Natural killer cell (primary cell): ENCODE measurements at regions of chr2 and their contacts with region 1.

Region 1: DNA sequence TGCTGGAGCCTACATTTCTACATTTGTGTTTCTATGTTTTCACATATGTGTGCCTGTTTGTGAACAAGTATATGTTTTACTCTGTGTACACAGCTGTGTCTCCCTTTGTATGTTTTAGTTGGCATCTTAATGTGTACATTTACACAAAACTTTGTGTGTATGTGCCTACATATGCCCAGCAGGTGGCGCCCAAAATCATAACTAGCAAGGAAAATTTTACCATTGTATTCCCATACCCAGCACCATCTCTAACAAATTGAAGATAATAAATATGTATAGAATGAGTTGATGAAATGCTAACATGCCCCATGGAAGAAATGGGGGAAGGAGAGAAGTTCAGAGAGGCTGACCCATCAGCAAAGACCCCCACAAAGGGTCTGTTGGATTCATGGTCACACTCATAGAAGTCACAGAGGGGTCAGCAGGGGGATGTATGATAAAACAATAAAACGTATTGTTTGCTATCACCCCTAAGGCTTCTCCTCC is 48.1 kb downstream of the PKDCC start:
- DNase-seq: peak; percentile 68 to 90
- ATAC-seq: peak; percentile 54 to 83 (median 69)
- H3K4me3 ChIP-seq: no peak overlapping the region
- H3K4me3 Mint-ChIP-seq: no peak overlapping the region
- H3K27ac ChIP-seq: no peak overlapping the region
- H3K27ac Mint-ChIP-seq: no peak overlapping the region
- H3K4me1 ChIP-seq: peaks cover 60% of the 10 kb centered on the region
- H3K4me1 Mint-ChIP-seq: peaks cover 30 to 41% of the 10 kb centered on the region in 2 donors
- H3K27me3 ChIP-seq: no peaks in the 10 kb centered on the region
- H3K27me3 Mint-ChIP-seq: no peaks in the 10 kb centered on the region
- CTCF ChIP-seq: peak; percentile 89

Region 2: GRCh38 chr2:42169100-42169873 is 73.3 kb after region 1 on chr2 and contains the start of gene EML4:
- intact Hi-C with region 1: loop called (anchors 2 kb)
- DNase-seq: peak; percentile 94 to 96
- ATAC-seq: peak; percentile 92 to 98 (median 94)
- H3K4me3 ChIP-seq: peak within 1 kb of the TSS; percentile 96
- H3K4me3 Mint-ChIP-seq: peak within 1 kb of the TSS; percentile 45
- H3K27ac ChIP-seq: peak within 1 kb of the TSS; percentile 94
- H3K27ac Mint-ChIP-seq: no peak within 1 kb of the TSS
- H3K4me1 ChIP-seq: peaks cover 19% of the 10 kb centered on the region
- H3K4me1 Mint-ChIP-seq: peaks cover 0 to 7% of the 10 kb centered on the region in 2 donors
- H3K27me3 ChIP-seq: no peaks in the 10 kb centered on the region
- H3K27me3 Mint-ChIP-seq: peaks cover 3 to 4% of the 10 kb centered on the region in 2 donors
- CTCF ChIP-seq: no peak
- total RNA-seq, gene EML4: 88.4 to 136 (median 91.5) TPM

Region 3: GRCh38 chr2:42196403-42197267 is 100.7 kb after region 1 on chr2:
- intact Hi-C with region 1: loop called (anchors 1 kb)
- DNase-seq: peak in 1 of 2 donors; percentile 76
- ATAC-seq: peak; percentile 84 to 88 (median 84)
- H3K4me3 ChIP-seq: no peak overlapping the region
- H3K4me3 Mint-ChIP-seq: no peak overlapping the region
- H3K27ac ChIP-seq: no peak overlapping the region
- H3K27ac Mint-ChIP-seq: peak overlapping the region; percentile 12 to 35
- H3K4me1 ChIP-seq: peaks cover 12% of the 10 kb centered on the region
- H3K4me1 Mint-ChIP-seq: peaks cover 38 to 39% of the 10 kb centered on the region in 2 donors
- H3K27me3 ChIP-seq: no peaks in the 10 kb centered on the region
- H3K27me3 Mint-ChIP-seq: no peaks in the 10 kb centered on the region
- CTCF ChIP-seq: peak; percentile 54

Region 4: DNA sequence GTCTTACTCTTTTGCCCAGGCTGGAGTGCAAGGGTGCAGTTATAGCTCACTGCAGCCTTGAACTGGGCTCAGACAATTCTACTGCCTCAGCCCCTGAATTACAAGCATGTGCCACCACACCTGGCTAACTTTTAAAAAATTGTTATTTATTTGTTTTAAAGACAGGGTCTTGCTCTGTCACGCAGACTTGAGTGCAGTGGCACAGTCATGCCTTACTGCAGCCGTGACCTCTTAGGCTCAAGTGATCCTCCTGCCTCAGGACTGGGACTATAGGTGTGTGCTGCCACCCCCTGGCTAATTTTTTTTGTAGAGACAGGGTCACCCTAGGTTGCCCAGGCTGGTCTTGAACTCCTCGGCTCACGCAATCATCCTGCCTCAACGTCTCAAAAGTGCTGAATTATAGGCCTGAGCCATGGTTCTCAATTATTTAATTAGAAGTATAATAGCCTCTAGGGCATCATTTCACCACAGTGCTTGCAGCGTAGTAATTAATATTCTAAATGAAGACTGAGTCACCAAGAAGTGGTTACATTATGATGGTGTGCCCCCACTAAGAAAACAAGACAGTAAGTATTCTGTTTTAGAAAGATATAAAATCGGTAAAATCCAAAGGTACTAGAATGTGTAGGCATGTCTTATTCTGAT is 142.8 kb after region 1 on chr2:
- intact Hi-C with region 1: loop called (anchors 1 kb)
- DNase-seq: peak in 1 of 2 donors; percentile 64
- ATAC-seq: peak; percentile 67 to 80 (median 72)
- H3K4me3 ChIP-seq: no peak overlapping the region
- H3K4me3 Mint-ChIP-seq: no peak overlapping the region
- H3K27ac ChIP-seq: no peak overlapping the region
- H3K27ac Mint-ChIP-seq: no peak overlapping the region
- H3K4me1 ChIP-seq: peaks cover 4% of the 10 kb centered on the region
- H3K4me1 Mint-ChIP-seq: peaks cover 13 to 29% of the 10 kb centered on the region in 2 donors
- H3K27me3 ChIP-seq: no peaks in the 10 kb centered on the region
- H3K27me3 Mint-ChIP-seq: no peaks in the 10 kb centered on the region
- CTCF ChIP-seq: peak; percentile 25

Region 5: DNA sequence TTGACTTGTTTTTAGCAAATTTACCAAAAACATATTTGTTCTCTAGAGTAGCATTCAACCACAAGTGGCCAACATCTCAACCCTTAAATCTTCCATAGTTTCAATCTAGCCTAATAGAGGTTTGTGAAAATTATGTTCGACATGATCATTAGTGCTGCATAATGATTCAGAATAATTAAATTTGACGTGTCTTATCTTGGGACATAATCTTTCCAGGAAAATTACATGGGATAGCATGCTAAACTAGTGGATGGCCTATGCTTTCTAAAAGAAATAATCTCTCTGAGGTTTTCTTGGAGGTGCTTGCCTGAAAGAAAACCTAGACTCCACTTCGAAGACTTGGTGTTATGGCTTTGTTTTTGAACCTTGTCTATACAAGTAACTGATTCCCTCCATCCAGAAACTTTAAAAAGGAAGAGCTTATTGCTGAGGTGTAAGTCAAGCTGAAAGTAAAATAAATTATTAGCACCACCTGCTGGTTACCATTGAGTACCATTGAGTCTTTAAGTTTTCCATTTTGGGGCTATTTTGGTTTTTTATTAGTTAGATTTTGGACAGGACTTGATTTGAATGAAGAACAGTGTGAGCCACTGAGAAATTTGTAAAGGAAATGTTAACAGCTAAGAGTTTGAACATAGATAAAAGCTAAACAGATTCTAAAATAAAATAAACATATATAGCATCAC is 232.3 kb after region 1 on chr2:
- intact Hi-C with region 1: loop called (anchors 1 kb)
- DNase-seq: peak in 1 of 2 donors; percentile 52
- ATAC-seq: peak in 2 of 3 donors; percentile 52 to 53
- H3K4me3 ChIP-seq: no peak overlapping the region
- H3K4me3 Mint-ChIP-seq: no peak overlapping the region
- H3K27ac ChIP-seq: no peak overlapping the region
- H3K27ac Mint-ChIP-seq: no peak overlapping the region
- H3K4me1 ChIP-seq: no peaks in the 10 kb centered on the region
- H3K4me1 Mint-ChIP-seq: peaks cover 0 to 4% of the 10 kb centered on the region in 2 donors
- H3K27me3 ChIP-seq: no peaks in the 10 kb centered on the region
- H3K27me3 Mint-ChIP-seq: no peaks in the 10 kb centered on the region
- CTCF ChIP-seq: peak; percentile 49